ENCODE measurements at regions of chr6 and their contacts with region 1.

Region 1: DNA sequence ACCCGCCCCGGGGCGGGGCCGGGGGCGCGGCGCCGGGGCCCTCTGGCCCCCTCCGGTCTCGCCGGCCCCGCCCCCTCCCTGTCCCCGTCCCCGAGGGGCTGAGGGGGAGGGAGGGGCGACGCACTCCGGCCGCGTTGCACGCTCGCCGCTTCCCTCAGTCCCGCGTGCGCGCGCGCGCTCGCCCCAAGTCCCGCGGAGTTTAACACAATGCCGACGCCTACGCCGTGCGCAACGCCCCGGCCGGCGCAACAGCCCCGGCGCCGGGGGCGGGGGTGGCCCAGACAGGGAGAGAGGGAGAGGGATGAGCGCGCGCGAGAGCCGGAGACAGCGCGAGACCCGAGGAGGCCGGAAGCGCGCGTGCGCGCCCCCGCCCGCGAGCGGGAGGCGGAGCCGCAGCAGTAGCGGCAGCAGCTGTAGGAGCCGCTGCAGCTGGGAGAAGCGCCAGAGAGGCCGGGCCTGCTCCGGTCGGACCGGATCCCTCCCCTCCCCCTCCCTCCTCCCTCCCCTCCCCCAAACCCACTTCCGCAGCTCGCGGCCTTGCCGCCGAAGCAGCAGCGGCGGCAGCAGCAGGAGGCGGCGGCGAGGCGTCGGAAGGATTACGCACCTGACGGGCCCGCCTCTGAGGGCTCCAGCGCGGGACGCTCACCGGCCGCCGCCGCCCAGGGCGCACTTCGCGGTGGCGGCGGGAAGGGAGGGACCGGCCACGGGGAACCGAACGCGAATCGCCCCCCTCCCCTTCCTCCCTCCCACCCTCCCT is 905 bp downstream of the ZBTB2 start:
- DNase-seq: peak; percentile 100
- H3K4me3 ChIP-seq: peak overlapping the region; percentile 21 to 91 (median 89)
- H3K27ac ChIP-seq: peak overlapping the region; percentile 72
- H3K4me1 ChIP-seq: peaks cover 33% of the 10 kb centered on the region
- H3K27me3 ChIP-seq: no peaks in the 10 kb centered on the region
- CTCF ChIP-seq: peak in 1 of 2 donors; percentile 7

Region 2: DNA sequence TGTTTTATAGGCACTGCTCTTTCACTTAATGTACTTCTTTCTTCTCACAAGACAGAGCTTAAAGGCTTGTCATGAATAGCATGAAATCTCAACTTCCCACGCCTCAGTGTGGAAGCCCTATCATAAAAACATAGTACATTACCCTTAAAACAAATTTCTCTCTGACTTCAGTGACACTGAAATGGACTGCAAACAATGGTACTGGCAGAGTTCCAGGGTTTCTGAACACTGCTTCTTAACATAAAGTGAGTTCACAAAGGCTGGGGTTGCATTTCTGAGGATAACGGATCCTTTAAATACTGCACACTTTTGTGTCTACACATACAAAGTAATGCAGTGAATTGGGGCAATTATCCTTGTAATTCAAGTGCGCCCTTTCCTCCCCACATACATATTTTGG is 823.1 kb before region 1 on chr6:
- CTCF ChIA-PET with region 1: no interaction called
- dilution Hi-C with region 1: no loop called
- in situ Hi-C with region 1: no loop called
- intact Hi-C with region 1: no loop called
- DNase-seq: no peak
- H3K4me3 ChIP-seq: no peak overlapping the region
- H3K27ac ChIP-seq: no peak overlapping the region
- H3K4me1 ChIP-seq: peaks cover 3% of the 10 kb centered on the region
- H3K27me3 ChIP-seq: no peaks in the 10 kb centered on the region
- CTCF ChIP-seq: no peak

Region 3: DNA sequence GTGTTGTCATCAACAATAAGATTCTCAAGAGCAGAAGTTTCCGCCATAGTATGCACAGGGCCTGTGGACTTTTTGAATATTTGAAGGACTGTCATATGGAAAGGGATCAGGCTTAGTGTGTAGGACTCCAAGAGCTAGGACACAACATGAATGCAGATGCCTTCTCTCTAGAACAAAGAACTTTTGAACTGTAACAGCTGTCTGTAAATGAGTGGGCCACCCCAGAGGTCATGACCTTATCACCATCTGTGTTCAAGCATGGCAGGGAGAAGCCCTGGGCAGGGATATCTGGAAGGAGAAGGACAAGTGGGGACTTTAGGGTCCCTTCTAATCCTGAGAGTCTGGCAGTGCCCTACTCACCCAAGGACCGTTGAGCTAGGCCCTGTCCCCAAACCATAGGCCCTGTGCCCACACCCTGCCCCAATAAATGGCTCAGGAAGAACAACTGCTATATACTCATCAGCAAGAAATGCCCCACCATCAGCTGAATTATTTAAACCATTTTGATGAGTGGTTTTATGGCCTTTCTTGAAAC is 454.4 kb before region 1 on chr6:
- CTCF ChIA-PET with region 1: interaction called, 13 read pairs
- dilution Hi-C with region 1: no loop called
- in situ Hi-C with region 1: no loop called
- intact Hi-C with region 1: no loop called
- DNase-seq: no peak
- H3K4me3 ChIP-seq: no peak overlapping the region
- H3K27ac ChIP-seq: no peak overlapping the region
- H3K4me1 ChIP-seq: no peaks in the 10 kb centered on the region
- H3K27me3 ChIP-seq: no peaks in the 10 kb centered on the region
- CTCF ChIP-seq: no peak

Region 4: GRCh38 chr6:151376440-151376839 is 14.0 kb before region 1 on chr6:
- CTCF ChIA-PET with region 1: no interaction called
- dilution Hi-C with region 1: no loop called
- in situ Hi-C with region 1: no loop called
- intact Hi-C with region 1: loop called (anchors 1 kb)
- DNase-seq: no peak
- H3K4me3 ChIP-seq: no peak overlapping the region
- H3K27ac ChIP-seq: no peak overlapping the region
- H3K4me1 ChIP-seq: peaks cover 11% of the 10 kb centered on the region
- H3K27me3 ChIP-seq: no peaks in the 10 kb centered on the region
- CTCF ChIP-seq: peak; percentile 3 to 7

Region 5: DNA sequence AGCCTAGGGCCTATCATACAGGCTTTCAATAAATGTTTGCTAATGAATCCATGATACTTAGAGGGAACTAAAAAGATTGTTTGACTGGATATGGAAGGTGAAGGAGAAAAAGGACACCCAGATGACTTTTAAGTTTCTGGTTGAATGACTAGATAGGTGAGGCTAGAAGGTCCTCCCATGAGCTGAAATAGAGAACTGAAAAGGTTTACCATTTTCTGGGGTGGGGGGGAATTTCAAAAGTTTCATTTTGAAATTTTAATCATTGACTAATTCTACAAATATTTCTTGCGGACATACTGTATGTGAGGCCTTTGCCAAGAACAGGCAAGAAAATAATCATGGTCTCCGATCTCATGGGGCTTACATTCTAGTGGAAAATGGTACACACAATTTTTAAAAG is 18.8 kb after region 1 on chr6:
- CTCF ChIA-PET with region 1: interaction called, 4 read pairs
- dilution Hi-C with region 1: no loop called
- in situ Hi-C with region 1: no loop called
- intact Hi-C with region 1: loop called (anchors 2 kb)
- DNase-seq: no peak
- H3K4me3 ChIP-seq: no peak overlapping the region
- H3K27ac ChIP-seq: no peak overlapping the region
- H3K4me1 ChIP-seq: no peaks in the 10 kb centered on the region
- H3K27me3 ChIP-seq: no peaks in the 10 kb centered on the region
- CTCF ChIP-seq: no peak

Region 6: DNA sequence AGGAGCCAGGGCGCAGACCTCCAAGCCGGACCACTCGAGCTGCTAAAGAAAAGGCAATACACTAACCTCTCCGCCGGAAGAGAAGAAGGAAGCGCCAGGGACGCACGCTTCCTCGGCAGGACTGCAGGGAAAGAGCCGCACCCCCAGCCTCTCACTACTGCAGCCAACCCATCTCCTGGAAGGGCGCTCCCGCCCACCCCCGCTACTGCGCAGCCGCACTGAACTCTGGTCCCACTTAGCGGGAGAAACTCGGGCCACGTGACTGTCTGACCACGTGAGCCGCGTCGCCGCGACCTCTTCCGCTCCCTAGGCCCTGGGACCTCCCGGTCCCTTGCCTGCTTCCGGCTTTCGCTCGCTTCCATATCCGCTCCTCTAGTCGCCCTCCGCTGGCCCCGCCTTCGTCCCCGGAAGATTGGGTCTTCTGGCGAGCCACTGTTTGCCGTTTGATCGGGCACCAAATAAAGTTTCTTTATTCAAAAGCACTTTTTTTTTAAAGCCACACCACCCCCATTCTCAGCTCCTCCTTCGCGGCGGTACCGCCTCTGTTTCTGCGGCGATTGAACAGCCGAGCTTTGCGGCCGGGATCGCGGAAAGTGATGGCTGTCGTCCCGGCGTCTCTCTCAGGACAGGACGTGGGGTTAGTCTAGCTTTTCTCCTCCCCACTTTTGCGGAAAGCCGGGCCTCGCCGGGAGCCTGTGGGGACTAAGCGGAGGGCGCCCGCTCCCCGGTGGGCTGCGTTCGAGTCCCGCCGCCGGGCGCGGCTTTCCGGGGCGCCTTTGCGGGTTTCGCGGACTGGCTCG is 61.7 kb after region 1 on chr6 and contains the start of gene RMND1:
- CTCF ChIA-PET with region 1: no interaction called
- dilution Hi-C with region 1: no loop called
- in situ Hi-C with region 1: no loop called
- intact Hi-C with region 1: loop called (anchors 1 kb)
- DNase-seq: peak; percentile 100
- H3K4me3 ChIP-seq: peak within 1 kb of the TSS; percentile 90 to 98 (median 93)
- H3K27ac ChIP-seq: peak within 1 kb of the TSS; percentile 79
- H3K4me1 ChIP-seq: peaks cover 4% of the 10 kb centered on the region
- H3K27me3 ChIP-seq: no peaks in the 10 kb centered on the region
- CTCF ChIP-seq: no peak
- total RNA-seq, gene RMND1: 15.7 to 26.7 TPM

Region 7: GRCh38 chr6:152124429-152125074 is 734.1 kb after region 1 on chr6:
- CTCF ChIA-PET with region 1: interaction called, 12 read pairs
- dilution Hi-C with region 1: no loop called
- in situ Hi-C with region 1: no loop called
- intact Hi-C with region 1: no loop called
- DNase-seq: peak; percentile 49
- H3K4me3 ChIP-seq: no peak overlapping the region
- H3K27ac ChIP-seq: no peak overlapping the region
- H3K4me1 ChIP-seq: peaks cover 23% of the 10 kb centered on the region
- H3K27me3 ChIP-seq: no peaks in the 10 kb centered on the region
- CTCF ChIP-seq: peak; percentile 85 to 88

Measured in mammary epithelial cell (primary cell).